Activated CD8-positive, alpha-beta T cell treated with anti-CD3 and anti-CD28 coated beads for 36 hours (primary cell): ENCODE measurements at regions of chr10 and their contacts with region 1.

Region 1: GRCh38 chr10:59830601-59831259 is 75.6 kb downstream of the CCDC6 start:
- DNase-seq: peak; percentile 41
- ATAC-seq: peak; percentile 30
- H3K4me3 Mint-ChIP-seq: no peak overlapping the region
- H3K27ac Mint-ChIP-seq: no peak overlapping the region
- H3K4me1 Mint-ChIP-seq: peaks cover 43% of the 10 kb centered on the region
- H3K27me3 Mint-ChIP-seq: no peaks in the 10 kb centered on the region
- CTCF ChIP-seq: peak; percentile 73

Region 2: DNA sequence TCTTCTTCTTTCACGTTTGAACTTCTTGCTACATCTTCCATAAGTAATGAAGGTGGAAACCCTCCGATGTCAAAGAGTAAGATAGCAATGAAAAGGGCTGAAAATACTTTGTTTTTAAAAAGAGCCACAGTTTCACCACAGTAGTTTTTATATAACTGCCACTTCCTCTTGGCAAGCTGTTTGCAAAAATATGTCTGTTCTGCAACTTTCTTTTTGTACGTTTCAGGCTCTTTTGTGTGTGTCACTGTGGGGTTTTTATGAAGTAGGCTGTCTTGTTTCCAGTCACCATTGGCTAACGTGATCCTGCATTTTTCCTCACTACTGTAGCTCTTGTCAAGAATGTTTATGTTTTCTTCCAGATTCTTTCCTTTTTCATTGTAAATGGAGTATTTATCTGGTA is 176.7 kb before region 1 on chr10:
- CTCF ChIA-PET with region 1: no interaction called
- POLR2A ChIA-PET with region 1: no interaction called
- intact Hi-C with region 1: no loop called
- DNase-seq: no peak
- ATAC-seq: no peak
- H3K4me3 Mint-ChIP-seq: no peak overlapping the region
- H3K27ac Mint-ChIP-seq: peak overlapping the region; percentile 34
- H3K4me1 Mint-ChIP-seq: peaks cover 10% of the 10 kb centered on the region
- H3K27me3 Mint-ChIP-seq: no peaks in the 10 kb centered on the region
- CTCF ChIP-seq: no peak

Region 3: GRCh38 chr10:59817773-59818172 is 13.0 kb before region 1 on chr10:
- CTCF ChIA-PET with region 1: interaction called, 14 read pairs
- POLR2A ChIA-PET with region 1: no interaction called
- intact Hi-C with region 1: no loop called
- DNase-seq: no peak
- ATAC-seq: no peak
- H3K4me3 Mint-ChIP-seq: no peak overlapping the region
- H3K27ac Mint-ChIP-seq: no peak overlapping the region
- H3K4me1 Mint-ChIP-seq: peaks cover 38% of the 10 kb centered on the region
- H3K27me3 Mint-ChIP-seq: no peaks in the 10 kb centered on the region
- CTCF ChIP-seq: no peak

Region 4: DNA sequence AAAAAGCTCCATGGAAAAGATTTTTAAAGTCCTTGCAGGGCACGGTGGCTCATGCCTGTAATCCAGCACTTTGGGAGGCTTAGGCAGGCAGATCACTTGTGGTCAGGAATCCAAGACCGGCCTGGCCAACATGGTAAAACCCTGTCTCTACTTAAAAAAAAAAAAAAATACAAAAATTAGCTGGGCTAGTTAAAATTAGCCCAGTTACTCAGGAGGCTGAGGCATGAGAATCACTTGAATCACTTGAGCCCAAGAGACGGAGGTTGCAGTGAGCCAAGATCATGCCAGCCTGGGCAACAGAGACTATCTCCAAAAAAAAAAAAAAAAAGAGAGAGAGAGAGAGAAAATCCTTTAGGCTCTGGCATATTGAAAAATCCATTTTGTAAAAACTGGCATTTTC is 13.7 kb after region 1 on chr10:
- CTCF ChIA-PET with region 1: interaction called, 13 read pairs
- POLR2A ChIA-PET with region 1: no interaction called
- intact Hi-C with region 1: no loop called
- DNase-seq: no peak
- ATAC-seq: no peak
- H3K4me3 Mint-ChIP-seq: no peak overlapping the region
- H3K27ac Mint-ChIP-seq: no peak overlapping the region
- H3K4me1 Mint-ChIP-seq: peaks cover 6% of the 10 kb centered on the region
- H3K27me3 Mint-ChIP-seq: no peaks in the 10 kb centered on the region
- CTCF ChIP-seq: no peak

Region 5: GRCh38 chr10:60032723-60033122 is 202.0 kb after region 1 on chr10:
- CTCF ChIA-PET with region 1: no interaction called
- POLR2A ChIA-PET with region 1: no interaction called
- intact Hi-C with region 1: loop called (anchors 10 kb)
- DNase-seq: peak; percentile 77
- ATAC-seq: peak; percentile 76
- H3K4me3 Mint-ChIP-seq: no peak overlapping the region
- H3K27ac Mint-ChIP-seq: no peak overlapping the region
- H3K4me1 Mint-ChIP-seq: peaks cover 4% of the 10 kb centered on the region
- H3K27me3 Mint-ChIP-seq: no peaks in the 10 kb centered on the region
- CTCF ChIP-seq: peak; percentile 55